ENCODE measurements at regions of chr6 and their contacts with region 1.

Region 1: DNA sequence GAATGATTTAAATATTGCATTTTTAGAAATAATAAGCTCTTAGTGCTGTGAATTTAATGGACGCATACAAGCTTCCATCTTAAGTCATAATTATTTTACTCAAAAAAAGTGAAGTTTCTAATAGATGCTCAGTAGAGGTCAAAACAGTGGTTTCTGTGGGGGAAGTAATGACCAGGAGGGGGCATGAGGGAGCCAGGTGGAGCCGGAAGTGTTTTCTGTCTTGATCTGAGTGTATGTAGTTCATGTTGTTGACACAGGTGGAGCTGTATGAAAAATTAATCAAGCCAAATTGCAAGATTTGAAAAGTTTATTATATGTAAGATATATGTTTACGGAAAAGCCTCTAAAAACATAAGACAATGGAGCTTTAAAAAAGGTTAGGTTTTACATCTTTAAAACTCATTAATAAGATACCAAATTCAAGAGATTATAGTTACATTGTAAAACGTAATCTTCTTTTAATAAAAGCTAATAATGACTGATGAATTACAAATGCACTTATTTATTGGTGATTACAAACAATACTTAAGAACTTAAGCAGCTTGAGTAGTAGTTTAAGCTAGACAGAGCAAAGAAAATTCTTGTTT is 68.0 kb downstream of the PLAGL1 start:
- H3K4me3 ChIP-seq: no peak overlapping the region
- H3K27ac ChIP-seq: no peak overlapping the region
- H3K4me1 ChIP-seq: no peaks in the 10 kb centered on the region
- CTCF ChIP-seq: no peak; the same call in 1 of the 2 replicates

Region 2: GRCh38 chr6:143575440-143575839 is 364.7 kb before region 1 on chr6:
- CTCF ChIA-PET with region 1: interaction called, 23 read pairs
- POLR2A ChIA-PET with region 1: no interaction called
- H3K4me3 ChIP-seq: no peak overlapping the region
- H3K27ac ChIP-seq: no peak overlapping the region
- H3K4me1 ChIP-seq: peaks cover 4% of the 10 kb centered on the region; the same call in 1 of the 2 replicates
- CTCF ChIP-seq: peak; percentile 76

Region 3: GRCh38 chr6:143928853-143929252 is 11.3 kb before region 1 on chr6:
- CTCF ChIA-PET with region 1: interaction called, 11 read pairs
- POLR2A ChIA-PET with region 1: no interaction called
- H3K4me3 ChIP-seq: no peak overlapping the region
- H3K27ac ChIP-seq: no peak overlapping the region
- H3K4me1 ChIP-seq: no peaks in the 10 kb centered on the region
- CTCF ChIP-seq: no peak

Region 4: DNA sequence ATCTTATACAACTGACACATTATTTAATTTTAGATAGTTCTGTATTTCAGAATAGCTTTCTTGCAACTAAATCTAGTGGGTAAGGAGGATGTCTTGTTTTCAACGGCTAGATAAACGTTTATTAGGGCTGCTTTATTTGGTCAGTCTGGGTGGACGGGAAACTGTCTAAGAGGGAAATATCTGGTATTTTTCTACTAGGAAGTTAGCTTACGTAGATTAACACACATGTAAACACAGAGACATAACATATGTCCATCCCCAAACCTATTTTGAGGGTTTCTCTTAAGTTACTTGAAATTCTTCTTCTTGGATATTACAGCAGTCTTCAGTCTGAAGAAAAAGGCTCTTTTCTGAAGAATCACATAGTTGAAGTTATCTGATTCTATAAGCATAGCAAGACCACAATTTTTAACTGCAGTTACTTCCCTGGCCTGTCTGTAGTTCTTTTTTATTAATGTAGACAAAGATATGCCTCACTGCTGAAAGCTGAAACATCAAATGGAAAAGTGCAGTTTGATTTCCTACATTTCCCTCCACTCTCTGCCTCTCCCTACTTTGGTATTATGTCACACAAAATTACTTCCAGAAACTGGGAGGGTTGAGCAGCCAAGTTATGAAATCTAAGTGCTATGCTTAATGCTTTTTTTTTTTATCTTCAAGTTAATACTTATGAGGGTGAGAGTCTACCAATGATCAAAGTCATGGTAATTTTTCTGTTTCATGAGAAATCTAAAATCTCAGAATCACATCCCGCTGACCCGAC is 30.5 kb after region 1 on chr6:
- CTCF ChIA-PET with region 1: interaction called, 12 read pairs
- POLR2A ChIA-PET with region 1: no interaction called
- H3K4me3 ChIP-seq: no peak overlapping the region
- H3K27ac ChIP-seq: no peak overlapping the region
- H3K4me1 ChIP-seq: peaks cover 6% of the 10 kb centered on the region; the same call in 1 of the 2 replicates
- CTCF ChIP-seq: no peak

Region 5: DNA sequence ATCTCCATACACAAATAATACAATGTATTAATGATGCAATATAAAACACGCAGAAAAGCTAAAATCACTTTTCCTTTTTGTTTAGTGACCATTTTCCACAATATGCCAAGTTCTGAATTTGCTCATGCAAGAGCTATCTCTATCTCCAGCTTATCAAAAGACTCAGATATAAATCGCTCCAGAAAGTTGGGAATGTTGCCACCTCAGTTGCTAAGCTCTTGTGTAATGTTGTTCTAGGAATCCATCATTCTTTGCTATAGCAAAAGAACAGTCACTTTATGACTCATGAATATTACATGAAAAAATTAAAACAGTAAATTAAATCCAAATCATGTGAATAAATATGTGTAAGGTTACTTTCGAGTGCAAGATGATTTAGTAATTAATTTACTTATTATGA is 59.3 kb after region 1 on chr6:
- CTCF ChIA-PET with region 1: interaction called, 10 read pairs
- POLR2A ChIA-PET with region 1: no interaction called
- H3K4me3 ChIP-seq: no peak overlapping the region
- H3K27ac ChIP-seq: no peak overlapping the region
- H3K4me1 ChIP-seq: no peaks in the 10 kb centered on the region
- CTCF ChIP-seq: no peak

Measured in HEK293 (cell line).